Caco-2 (cell line): ENCODE measurements at regions of chr4 and their contacts with region 1.

Region 1: DNA sequence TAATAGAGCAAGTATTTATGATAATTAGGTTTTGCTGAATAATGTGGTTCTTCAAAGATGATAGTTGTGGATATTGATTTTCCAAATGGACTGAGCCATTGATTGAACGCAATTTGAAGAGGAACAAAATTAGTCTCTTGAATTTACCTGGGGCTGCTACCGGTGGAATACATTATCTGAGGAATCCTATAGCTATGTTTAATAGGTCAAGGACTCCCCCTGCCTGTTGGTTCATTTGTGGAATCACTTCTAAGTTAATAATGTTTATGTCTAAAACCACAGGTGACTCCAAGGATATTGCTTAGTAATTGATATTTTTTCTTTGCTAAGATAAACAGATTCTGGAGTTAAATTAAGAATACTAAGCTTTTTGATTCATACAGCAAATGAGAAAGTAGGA is 576.0 kb upstream of the PABPC4L start:
- DNase-seq: peak in 1 of 2 experiments; percentile 41
- H3K4me3 ChIP-seq: no peak overlapping the region
- H3K4me3 Mint-ChIP-seq: no peak overlapping the region
- H3K27ac Mint-ChIP-seq: no peak overlapping the region
- H3K4me1 ChIP-seq: no peaks in the 10 kb centered on the region
- H3K4me1 Mint-ChIP-seq: no peaks in the 10 kb centered on the region
- H3K27me3 ChIP-seq: no peaks in the 10 kb centered on the region
- H3K27me3 Mint-ChIP-seq: no peaks in the 10 kb centered on the region
- CTCF ChIP-seq: peak; percentile 22 to 38

Region 2: DNA sequence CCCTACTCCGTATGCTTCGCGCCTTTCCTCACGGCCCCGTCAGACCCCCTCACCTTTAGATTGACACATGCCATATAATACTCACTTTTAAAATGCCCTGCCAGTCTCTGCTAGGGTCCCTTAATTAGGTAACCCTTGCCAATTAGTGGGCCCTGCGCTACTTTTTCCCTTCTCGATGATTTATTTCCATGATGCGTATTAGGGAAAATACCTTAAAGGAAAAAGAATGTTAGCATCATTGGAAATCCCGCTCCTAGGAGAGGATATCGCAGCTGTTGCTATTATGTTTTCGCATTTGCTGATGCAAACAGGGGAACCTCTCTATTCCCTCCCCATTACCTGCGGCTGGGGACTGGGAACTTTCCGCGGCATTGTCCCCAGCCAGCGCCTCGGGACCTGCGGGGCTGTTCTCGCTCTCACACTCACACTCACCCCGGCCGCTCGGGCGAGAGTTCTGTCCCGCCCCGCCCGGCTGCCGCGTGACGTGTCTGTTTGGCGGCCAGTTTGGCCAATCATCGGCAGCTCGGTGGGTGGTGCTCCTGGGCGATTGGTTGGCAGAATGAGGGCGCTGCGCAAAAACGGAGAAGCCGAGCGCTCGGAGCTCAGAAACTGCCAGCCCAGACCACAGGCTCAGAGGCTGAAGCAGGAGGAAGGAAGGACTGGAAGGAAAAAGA is 1628.8 kb before region 1 on chr4 and contains the start of gene PCDH10:
- CTCF ChIA-PET with region 1: no interaction called
- POLR2A ChIA-PET with region 1: no interaction called
- intact Hi-C with region 1: loop called (anchors 5 kb)
- DNase-seq: no peak
- H3K4me3 ChIP-seq: no peak within 1 kb of the TSS
- H3K4me3 Mint-ChIP-seq: no peak within 1 kb of the TSS
- H3K27ac Mint-ChIP-seq: no peak within 1 kb of the TSS
- H3K4me1 ChIP-seq: no peaks in the 10 kb centered on the region
- H3K4me1 Mint-ChIP-seq: no peaks in the 10 kb centered on the region
- H3K27me3 ChIP-seq: no peaks in the 10 kb centered on the region
- H3K27me3 Mint-ChIP-seq: peaks cover 4% of the 10 kb centered on the region
- CTCF ChIP-seq: no peak
- total RNA-seq, gene PCDH10: not detected in 2 replicates

Region 3: DNA sequence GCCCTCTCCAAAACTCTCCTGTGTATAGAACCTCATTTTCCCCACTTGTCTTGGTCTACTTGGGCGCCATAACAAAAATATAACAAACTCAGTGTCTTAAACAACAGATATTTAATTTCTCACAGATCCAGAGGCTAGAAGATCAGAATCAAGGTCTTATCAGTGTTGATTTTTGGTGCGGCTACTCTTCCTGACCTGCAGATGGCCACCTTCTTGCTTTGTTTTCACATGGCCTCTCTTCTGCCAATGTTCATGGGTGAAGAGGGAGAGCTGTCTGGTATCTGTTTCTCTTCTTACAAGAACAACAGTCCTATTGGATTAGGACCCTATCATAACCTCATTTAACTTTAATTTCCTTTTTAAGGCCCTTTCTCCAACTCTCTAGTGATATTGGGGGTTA is 753.4 kb before region 1 on chr4:
- CTCF ChIA-PET with region 1: no interaction called
- POLR2A ChIA-PET with region 1: no interaction called
- intact Hi-C with region 1: loop called (anchors 5 kb)
- DNase-seq: peak; percentile 18 to 38
- H3K4me3 ChIP-seq: no peak overlapping the region
- H3K4me3 Mint-ChIP-seq: no peak overlapping the region
- H3K27ac Mint-ChIP-seq: no peak overlapping the region
- H3K4me1 ChIP-seq: no peaks in the 10 kb centered on the region
- H3K4me1 Mint-ChIP-seq: no peaks in the 10 kb centered on the region
- H3K27me3 ChIP-seq: no peaks in the 10 kb centered on the region
- H3K27me3 Mint-ChIP-seq: no peaks in the 10 kb centered on the region
- CTCF ChIP-seq: peak; percentile 43 to 44

Region 4: GRCh38 chr4:134297765-134298164 is 479.8 kb before region 1 on chr4:
- CTCF ChIA-PET with region 1: no interaction called
- POLR2A ChIA-PET with region 1: no interaction called
- intact Hi-C with region 1: no loop called
- DNase-seq: no peak
- H3K4me3 ChIP-seq: no peak overlapping the region
- H3K4me3 Mint-ChIP-seq: no peak overlapping the region
- H3K27ac Mint-ChIP-seq: no peak overlapping the region
- H3K4me1 ChIP-seq: no peaks in the 10 kb centered on the region
- H3K4me1 Mint-ChIP-seq: no peaks in the 10 kb centered on the region
- H3K27me3 ChIP-seq: no peaks in the 10 kb centered on the region
- H3K27me3 Mint-ChIP-seq: no peaks in the 10 kb centered on the region
- CTCF ChIP-seq: no peak

Region 5: DNA sequence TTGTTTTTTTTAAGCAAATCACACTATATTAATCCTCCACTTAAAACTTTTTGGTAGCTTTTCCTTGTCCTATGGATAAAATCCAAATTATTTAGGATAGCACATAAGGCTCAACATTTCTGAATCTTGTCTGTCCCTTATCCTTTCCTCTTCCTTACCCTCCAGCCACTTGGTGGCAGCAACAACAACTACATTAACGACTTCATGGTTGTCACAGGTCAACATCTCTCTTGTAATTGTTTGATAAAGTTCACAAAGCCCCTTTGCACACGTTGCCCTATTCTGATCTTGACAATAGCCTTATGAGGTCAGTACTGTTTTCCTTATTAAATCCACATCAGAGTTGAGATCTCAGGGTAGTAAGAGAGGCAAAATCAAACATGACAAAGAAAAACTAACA is 307.1 kb before region 1 on chr4:
- CTCF ChIA-PET with region 1: no interaction called
- POLR2A ChIA-PET with region 1: no interaction called
- intact Hi-C with region 1: loop called (anchors 1 kb)
- DNase-seq: peak; percentile 42 to 44
- H3K4me3 ChIP-seq: no peak overlapping the region
- H3K4me3 Mint-ChIP-seq: no peak overlapping the region
- H3K27ac Mint-ChIP-seq: no peak overlapping the region
- H3K4me1 ChIP-seq: no peaks in the 10 kb centered on the region
- H3K4me1 Mint-ChIP-seq: no peaks in the 10 kb centered on the region
- H3K27me3 ChIP-seq: no peaks in the 10 kb centered on the region
- H3K27me3 Mint-ChIP-seq: no peaks in the 10 kb centered on the region
- CTCF ChIP-seq: peak; percentile 44 to 56

Region 6: GRCh38 chr4:134529629-134530028 is 248.0 kb before region 1 on chr4:
- CTCF ChIA-PET with region 1: interaction called, 3 read pairs
- POLR2A ChIA-PET with region 1: no interaction called
- intact Hi-C with region 1: loop called (anchors 1 kb)
- DNase-seq: no peak
- H3K4me3 ChIP-seq: no peak overlapping the region
- H3K4me3 Mint-ChIP-seq: no peak overlapping the region
- H3K27ac Mint-ChIP-seq: no peak overlapping the region
- H3K4me1 ChIP-seq: no peaks in the 10 kb centered on the region
- H3K4me1 Mint-ChIP-seq: no peaks in the 10 kb centered on the region
- H3K27me3 ChIP-seq: no peaks in the 10 kb centered on the region
- H3K27me3 Mint-ChIP-seq: no peaks in the 10 kb centered on the region
- CTCF ChIP-seq: no peak

Region 7: GRCh38 chr4:134906404-134907023 is 128.9 kb after region 1 on chr4:
- CTCF ChIA-PET with region 1: no interaction called
- POLR2A ChIA-PET with region 1: no interaction called
- intact Hi-C with region 1: loop called (anchors 5 kb)
- DNase-seq: peak in 1 of 2 experiments; percentile 18
- H3K4me3 ChIP-seq: no peak overlapping the region
- H3K4me3 Mint-ChIP-seq: no peak overlapping the region
- H3K27ac Mint-ChIP-seq: no peak overlapping the region
- H3K4me1 ChIP-seq: no peaks in the 10 kb centered on the region
- H3K4me1 Mint-ChIP-seq: no peaks in the 10 kb centered on the region
- H3K27me3 ChIP-seq: no peaks in the 10 kb centered on the region
- H3K27me3 Mint-ChIP-seq: no peaks in the 10 kb centered on the region
- CTCF ChIP-seq: peak; percentile 42 to 57